ENCODE measurements at regions of chr19 and their contacts with region 1.

Region 1: DNA sequence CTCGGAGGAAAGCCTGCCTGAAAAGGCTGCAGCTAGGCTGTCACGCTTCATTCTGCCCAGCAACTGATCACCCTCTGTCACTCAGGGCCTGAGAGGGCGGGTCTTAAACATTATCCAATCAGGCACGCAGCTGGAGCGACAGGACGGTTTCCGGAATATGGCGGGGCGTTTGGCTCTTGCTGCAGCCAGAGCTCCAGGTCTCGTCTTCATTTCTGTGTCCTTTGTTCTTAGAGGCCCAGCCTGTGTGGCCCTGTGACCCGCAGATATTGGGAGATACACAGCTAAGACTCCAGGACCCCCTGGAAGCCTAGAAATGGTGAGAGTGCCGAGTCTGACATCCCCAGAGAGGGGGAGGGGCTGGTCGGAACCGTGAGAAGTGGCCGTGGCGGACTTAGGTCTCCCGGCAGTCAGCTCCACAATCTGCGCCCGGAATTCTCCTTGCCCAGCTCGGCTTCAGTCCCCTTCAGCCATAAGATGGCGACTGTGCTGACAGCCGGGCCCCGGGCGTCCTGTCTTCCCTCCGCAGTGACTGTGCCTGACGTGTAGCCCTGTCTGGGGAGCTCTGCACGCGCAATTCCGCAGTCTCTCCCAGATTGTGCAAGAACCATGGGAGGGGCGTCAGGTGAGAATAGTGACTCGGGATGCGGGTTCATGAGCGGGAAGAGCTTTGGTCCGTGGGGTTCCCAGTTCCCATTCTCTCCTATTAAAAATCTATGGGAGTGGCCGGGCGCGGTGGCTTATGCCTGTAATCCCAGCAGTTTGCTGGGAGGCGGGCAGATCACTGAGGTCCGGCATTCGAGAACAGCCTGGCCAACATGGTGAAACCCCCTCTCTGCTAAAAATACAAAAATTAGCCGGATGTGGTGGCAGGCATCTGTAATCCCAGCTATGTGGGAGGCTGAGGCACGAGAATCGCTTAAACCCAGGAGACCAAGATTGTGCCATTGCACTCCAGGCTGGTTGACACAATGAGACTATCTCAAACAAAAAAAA is at the start of gene ZNF429:
- DNase-seq: peak; percentile 89 to 96 (median 90)
- H3K4me3 ChIP-seq: peak within 1 kb of the TSS; percentile 89 to 99
- H3K4me3 Mint-ChIP-seq: peak within 1 kb of the TSS; percentile 99 to 100 (median 100)
- H3K27ac ChIP-seq: peak within 1 kb of the TSS; percentile 93
- H3K27ac Mint-ChIP-seq: peak within 1 kb of the TSS; percentile 99 to 100 (median 100)
- H3K4me1 ChIP-seq: peaks cover 24% of the 10 kb centered on the region
- H3K4me1 Mint-ChIP-seq: peaks cover 23 to 50% (median 38%) of the 10 kb centered on the region in 4 donors
- H3K27me3 ChIP-seq: no peaks in the 10 kb centered on the region
- H3K27me3 Mint-ChIP-seq: no peaks in the 10 kb centered on the region
- total RNA-seq, gene ZNF429: 27.9 to 31.9 TPM

Region 2: DNA sequence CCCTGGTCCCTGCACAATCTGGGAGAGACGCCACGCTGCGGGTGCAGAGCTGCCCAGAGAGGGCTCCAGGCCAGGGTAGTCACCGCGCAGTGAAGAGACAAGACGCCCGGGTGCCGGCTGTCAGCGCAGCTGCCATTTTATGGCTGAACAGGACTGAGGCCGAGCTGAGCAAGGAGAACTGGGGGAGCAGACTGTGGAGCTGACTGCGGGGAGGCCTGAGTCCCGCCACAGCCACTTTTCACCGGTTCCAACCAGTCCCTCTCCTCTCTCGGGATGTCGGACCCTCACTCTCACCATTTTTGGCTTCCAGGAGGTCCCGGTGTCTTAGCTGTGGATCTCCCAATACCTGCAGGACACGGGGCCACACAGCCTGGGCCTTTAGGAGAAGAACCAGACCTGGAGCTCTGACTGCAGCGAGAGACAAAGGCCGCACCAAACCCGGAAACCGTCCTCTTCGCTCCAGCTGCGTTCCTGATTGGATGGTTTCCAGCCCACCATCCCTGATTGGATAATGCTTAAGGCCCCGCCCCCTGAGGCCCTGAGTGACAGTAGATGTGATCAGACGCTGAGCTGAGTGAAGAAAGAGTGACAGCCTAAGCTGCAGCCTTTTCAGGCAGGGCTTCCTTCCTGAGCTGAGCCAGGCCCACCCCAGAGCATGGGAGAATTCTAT is 844.5 kb before region 1 on chr19 and contains the start of gene ZNF626:
- CTCF ChIA-PET with region 1: no interaction called
- POLR2A ChIA-PET with region 1: interaction called, 10 read pairs
- intact Hi-C with region 1: no loop called
- DNase-seq: peak; percentile 88 to 95 (median 92)
- H3K4me3 ChIP-seq: peak within 1 kb of the TSS; percentile 36 to 60
- H3K4me3 Mint-ChIP-seq: peak within 1 kb of the TSS; percentile 90 to 98 (median 97)
- H3K27ac ChIP-seq: peak within 1 kb of the TSS; percentile 81
- H3K27ac Mint-ChIP-seq: peak within 1 kb of the TSS; percentile 91 to 98 (median 97)
- H3K4me1 ChIP-seq: peaks cover 12% of the 10 kb centered on the region
- H3K4me1 Mint-ChIP-seq: peaks cover 20 to 73% (median 46%) of the 10 kb centered on the region in 4 donors
- H3K27me3 ChIP-seq: no peaks in the 10 kb centered on the region
- H3K27me3 Mint-ChIP-seq: no peaks in the 10 kb centered on the region
- total RNA-seq, gene ZNF626: 18.6 to 19.8 TPM

Region 3: DNA sequence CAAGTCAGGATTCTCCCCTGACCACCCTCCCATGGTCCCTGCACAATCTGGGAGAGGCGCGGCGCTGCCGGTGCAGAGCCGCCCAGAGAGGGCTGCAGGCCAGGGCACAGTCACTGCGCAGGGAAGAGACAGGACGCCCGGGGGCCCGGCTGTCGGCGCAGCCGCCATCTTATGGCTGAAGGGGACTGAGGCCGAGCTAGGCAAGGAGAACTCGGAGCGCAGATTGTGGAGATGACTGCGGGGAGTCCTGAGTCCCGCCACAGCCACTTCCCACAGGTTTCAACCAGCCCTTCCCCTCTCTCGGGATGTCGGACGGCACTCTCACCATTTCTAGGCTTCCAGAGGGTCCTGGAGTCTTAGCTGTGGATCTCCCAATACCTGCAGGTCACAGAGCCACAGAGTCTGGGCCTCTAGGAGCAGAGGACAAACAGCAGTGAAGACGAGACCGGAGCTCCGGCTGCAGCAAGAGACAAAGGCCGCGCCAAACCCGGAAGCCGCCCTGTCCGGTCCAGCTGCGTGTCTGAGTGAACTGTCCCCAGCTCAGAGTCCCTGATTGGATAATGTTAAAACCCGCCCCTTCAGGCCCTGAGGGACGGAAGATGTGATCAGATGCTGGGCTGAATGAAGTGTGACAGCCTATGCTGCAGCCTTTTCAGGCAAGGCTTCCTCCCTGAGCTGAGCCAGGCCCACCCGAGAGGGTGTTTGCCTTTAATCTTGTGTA is 176.7 kb before region 1 on chr19 and contains the start of gene ZNF708:
- CTCF ChIA-PET with region 1: interaction called, 3 read pairs
- POLR2A ChIA-PET with region 1: interaction called, 26 read pairs
- intact Hi-C with region 1: loop called (anchors 5 kb)
- DNase-seq: peak; percentile 67 to 88 (median 75)
- H3K4me3 ChIP-seq: peak within 1 kb of the TSS; percentile 92 to 93
- H3K4me3 Mint-ChIP-seq: peak within 1 kb of the TSS; percentile 98 to 99 (median 99)
- H3K27ac ChIP-seq: peak within 1 kb of the TSS; percentile 94
- H3K27ac Mint-ChIP-seq: peak within 1 kb of the TSS; percentile 98 to 100 (median 99)
- H3K4me1 ChIP-seq: peaks cover 28% of the 10 kb centered on the region
- H3K4me1 Mint-ChIP-seq: peaks cover 28 to 48% (median 36%) of the 10 kb centered on the region in 4 donors
- H3K27me3 ChIP-seq: no peaks in the 10 kb centered on the region
- H3K27me3 Mint-ChIP-seq: no peaks in the 10 kb centered on the region
- total RNA-seq, gene ZNF708: 42.5 to 44.2 TPM

Region 4: GRCh38 chr19:21482863-21483276 is 22.9 kb before region 1 on chr19:
- CTCF ChIA-PET with region 1: interaction called, 34 read pairs
- POLR2A ChIA-PET with region 1: interaction called, 5 read pairs
- intact Hi-C with region 1: no loop called
- DNase-seq: peak; percentile 56 to 73 (median 66)
- H3K4me3 ChIP-seq: no peak overlapping the region
- H3K4me3 Mint-ChIP-seq: peak overlapping the region in 2 of 8 donors; percentile 6 to 57
- H3K27ac ChIP-seq: no peak overlapping the region
- H3K27ac Mint-ChIP-seq: no peak overlapping the region
- H3K4me1 ChIP-seq: no peaks in the 10 kb centered on the region
- H3K4me1 Mint-ChIP-seq: peaks cover 0 to 2% (median 0%) of the 10 kb centered on the region in 4 donors
- H3K27me3 ChIP-seq: no peaks in the 10 kb centered on the region
- H3K27me3 Mint-ChIP-seq: no peaks in the 10 kb centered on the region

Region 5: GRCh38 chr19:21580101-21580500 is 74.3 kb after region 1 on chr19:
- CTCF ChIA-PET with region 1: interaction called, 3 read pairs
- POLR2A ChIA-PET with region 1: interaction called, 20 read pairs
- intact Hi-C with region 1: no loop called
- DNase-seq: no peak
- H3K4me3 ChIP-seq: no peak overlapping the region
- H3K4me3 Mint-ChIP-seq: peak overlapping the region in 3 of 8 donors; percentile 4 to 10 (median 5)
- H3K27ac ChIP-seq: no peak overlapping the region
- H3K27ac Mint-ChIP-seq: peak overlapping the region in 4 of 7 donors; percentile 15 to 75 (median 48)
- H3K4me1 ChIP-seq: peaks cover 14% of the 10 kb centered on the region
- H3K4me1 Mint-ChIP-seq: peaks cover 8 to 43% (median 10%) of the 10 kb centered on the region in 4 donors
- H3K27me3 ChIP-seq: no peaks in the 10 kb centered on the region
- H3K27me3 Mint-ChIP-seq: peaks cover 1 to 4% of the 10 kb centered on the region in 2 donors

Region 6: GRCh38 chr19:21604351-21604926 is 98.7 kb after region 1 on chr19:
- CTCF ChIA-PET with region 1: no interaction called
- POLR2A ChIA-PET with region 1: interaction called, 14 read pairs
- intact Hi-C with region 1: no loop called
- DNase-seq: peak in 3 of 5 donors; percentile 29 to 35 (median 29)
- H3K4me3 ChIP-seq: peak overlapping the region; percentile 45 to 62
- H3K4me3 Mint-ChIP-seq: peak overlapping the region; percentile 86 to 95 (median 90)
- H3K27ac ChIP-seq: peak overlapping the region; percentile 33
- H3K27ac Mint-ChIP-seq: peak overlapping the region; percentile 70 to 94 (median 93)
- H3K4me1 ChIP-seq: peaks cover 18% of the 10 kb centered on the region
- H3K4me1 Mint-ChIP-seq: peaks cover 10 to 25% (median 19%) of the 10 kb centered on the region in 4 donors
- H3K27me3 ChIP-seq: no peaks in the 10 kb centered on the region
- H3K27me3 Mint-ChIP-seq: no peaks in the 10 kb centered on the region

Region 7: DNA sequence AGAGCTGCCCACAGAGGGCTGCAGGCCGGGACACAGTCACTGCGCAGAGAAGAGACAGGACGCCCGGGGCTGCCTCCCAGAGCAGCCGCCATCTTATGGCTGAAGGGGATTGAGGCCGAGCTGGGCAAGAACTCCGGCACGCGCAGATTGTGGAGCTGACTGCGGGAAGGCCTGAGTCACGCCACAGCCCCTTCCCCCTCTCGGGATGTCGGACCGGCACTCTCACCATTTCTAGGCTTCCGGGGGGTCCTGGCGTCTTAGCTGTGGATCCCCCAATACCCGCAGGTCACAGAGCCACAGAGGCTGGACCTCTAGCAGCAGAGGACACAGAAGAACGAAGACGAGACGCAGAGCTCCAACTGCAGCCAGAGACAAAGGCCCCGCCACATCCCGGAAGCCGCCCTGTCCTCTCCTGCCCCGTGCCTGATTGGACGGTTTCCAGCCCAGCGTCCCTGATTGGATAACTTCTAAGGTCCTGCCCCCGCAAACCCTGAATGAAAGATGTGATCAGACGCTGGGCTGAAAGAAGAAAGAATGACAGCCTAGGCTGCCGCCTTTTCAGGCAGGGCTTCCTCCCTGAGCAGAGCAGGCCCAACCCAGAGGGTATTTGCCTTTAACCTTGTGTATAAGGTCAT is 330.2 kb after region 1 on chr19 and contains the start of gene ZNF43:
- CTCF ChIA-PET with region 1: interaction called, 3 read pairs
- POLR2A ChIA-PET with region 1: interaction called, 13 read pairs
- intact Hi-C with region 1: loop called (anchors 1 kb)
- DNase-seq: peak; percentile 92 to 95 (median 92)
- H3K4me3 ChIP-seq: peak within 1 kb of the TSS; percentile 73 to 93
- H3K4me3 Mint-ChIP-seq: peak within 1 kb of the TSS; percentile 97 to 99 (median 99)
- H3K27ac ChIP-seq: peak within 1 kb of the TSS; percentile 80
- H3K27ac Mint-ChIP-seq: peak within 1 kb of the TSS; percentile 95 to 99 (median 98)
- H3K4me1 ChIP-seq: peaks cover 16% of the 10 kb centered on the region
- H3K4me1 Mint-ChIP-seq: peaks cover 15 to 44% (median 31%) of the 10 kb centered on the region in 4 donors
- H3K27me3 ChIP-seq: no peaks in the 10 kb centered on the region
- H3K27me3 Mint-ChIP-seq: no peaks in the 10 kb centered on the region
- total RNA-seq, gene ZNF43: 27.6 to 31.9 TPM